Prostate gland (tissue), 2 donors: ENCODE measurements at regions of chrX and their contacts with region 1.

Region 1: DNA sequence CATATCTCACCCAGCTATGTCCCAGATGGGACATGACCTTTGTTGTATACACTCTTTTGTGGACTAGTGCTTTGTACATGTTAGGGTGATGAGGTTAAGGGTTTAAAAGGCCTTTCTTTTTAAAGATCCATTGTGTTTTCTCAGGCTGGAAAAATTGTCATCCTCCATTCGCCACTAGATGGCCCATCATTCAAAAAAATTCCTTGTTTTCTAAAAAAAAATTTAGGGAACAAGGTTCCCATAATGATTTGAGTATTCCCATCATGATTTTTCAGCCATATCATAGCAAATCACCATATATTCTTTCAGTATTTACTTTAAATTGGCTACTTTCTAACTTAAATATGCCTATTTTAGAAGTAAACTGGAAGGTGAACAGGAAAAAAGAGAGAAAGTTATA is 91.9 kb upstream of the TMEM164 start:
- DNase-seq: no peak
- H3K4me3 ChIP-seq: no peak overlapping the region
- H3K27ac ChIP-seq: no peak overlapping the region
- H3K4me1 ChIP-seq: no peaks in the 10 kb centered on the region
- H3K27me3 ChIP-seq: no peaks in the 10 kb centered on the region
- CTCF ChIP-seq: peak in 3 of 4 experiments; percentile 33 to 51 (median 50)
- POLR2A ChIP-seq: no peak

Region 2: GRCh38 chrX:110002300-110003166 is 91.5 kb after region 1 on chrX and contains the start of gene TMEM164:
- intact Hi-C with region 1: loop called (anchors 10 kb)
- DNase-seq: peak; percentile 69
- H3K4me3 ChIP-seq: peak within 1 kb of the TSS; percentile 47 to 50
- H3K27ac ChIP-seq: peak within 1 kb of the TSS; percentile 79 to 88
- H3K4me1 ChIP-seq: no peaks in the 10 kb centered on the region
- H3K27me3 ChIP-seq: no peaks in the 10 kb centered on the region
- CTCF ChIP-seq: peak in 2 of 4 experiments; percentile 20 to 35
- POLR2A ChIP-seq: peak; percentile 6
- total RNA-seq, gene TMEM164: 45.5 to 445 TPM

Region 3: DNA sequence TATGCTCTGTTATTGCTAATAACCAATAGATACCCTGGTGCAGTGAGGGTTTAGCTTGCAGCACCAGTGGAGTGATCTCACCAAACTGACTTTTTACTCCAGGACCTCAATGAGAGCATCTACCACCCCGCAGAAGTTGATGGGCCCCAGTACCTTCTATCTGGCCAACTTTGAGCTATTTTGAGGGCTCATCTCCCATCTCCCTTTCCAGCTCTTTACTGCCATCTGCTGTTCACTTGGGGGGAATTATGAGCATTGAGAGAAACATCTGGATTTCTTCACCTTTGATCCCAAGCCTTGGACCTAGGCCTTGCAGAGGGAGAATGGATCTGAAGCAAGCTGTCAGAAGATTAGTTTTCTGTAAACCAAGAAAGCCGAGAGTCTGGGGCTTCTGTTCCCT is 235.5 kb after region 1 on chrX:
- intact Hi-C with region 1: loop called (anchors 10 kb)
- DNase-seq: peak; percentile 8
- H3K4me3 ChIP-seq: no peak overlapping the region
- H3K27ac ChIP-seq: no peak overlapping the region
- H3K4me1 ChIP-seq: no peaks in the 10 kb centered on the region
- H3K27me3 ChIP-seq: no peaks in the 10 kb centered on the region
- CTCF ChIP-seq: peak; percentile 18 to 62 (median 58)
- POLR2A ChIP-seq: no peak